ENCODE measurements at regions of chr7 and their contacts with region 1.

Region 1: GRCh38 chr7:8277394-8277982 is 15.5 kb upstream of the ICA1 start:
- DNase-seq: peak; percentile 24
- ATAC-seq: peak; percentile 74
- H3K4me3 ChIP-seq: no peak overlapping the region
- H3K27ac ChIP-seq: no peak overlapping the region
- H3K4me1 ChIP-seq: no peaks in the 10 kb centered on the region
- H3K27me3 ChIP-seq: peaks cover 19% of the 10 kb centered on the region
- CTCF ChIP-seq: peak; percentile 71

Region 2: GRCh38 chr7:8365503-8366110 is 88.1 kb after region 1 on chr7:
- CTCF ChIA-PET with region 1: no interaction called
- POLR2A ChIA-PET with region 1: no interaction called
- in situ Hi-C with region 1: no loop called
- intact Hi-C with region 1: loop called (anchors 10 kb)
- DNase-seq: peak; percentile 20
- ATAC-seq: peak; percentile 83
- H3K4me3 ChIP-seq: no peak overlapping the region
- H3K27ac ChIP-seq: no peak overlapping the region
- H3K4me1 ChIP-seq: no peaks in the 10 kb centered on the region
- H3K27me3 ChIP-seq: 0 out of 2 replicates have a peak, but pooled peaks cover 2% of the 10 kb centered on the region
- CTCF ChIP-seq: peak; percentile 67

Measured in Panc1 (cell line).